ENCODE measurements at regions of chr6 and their contacts with region 1.

Region 1: DNA sequence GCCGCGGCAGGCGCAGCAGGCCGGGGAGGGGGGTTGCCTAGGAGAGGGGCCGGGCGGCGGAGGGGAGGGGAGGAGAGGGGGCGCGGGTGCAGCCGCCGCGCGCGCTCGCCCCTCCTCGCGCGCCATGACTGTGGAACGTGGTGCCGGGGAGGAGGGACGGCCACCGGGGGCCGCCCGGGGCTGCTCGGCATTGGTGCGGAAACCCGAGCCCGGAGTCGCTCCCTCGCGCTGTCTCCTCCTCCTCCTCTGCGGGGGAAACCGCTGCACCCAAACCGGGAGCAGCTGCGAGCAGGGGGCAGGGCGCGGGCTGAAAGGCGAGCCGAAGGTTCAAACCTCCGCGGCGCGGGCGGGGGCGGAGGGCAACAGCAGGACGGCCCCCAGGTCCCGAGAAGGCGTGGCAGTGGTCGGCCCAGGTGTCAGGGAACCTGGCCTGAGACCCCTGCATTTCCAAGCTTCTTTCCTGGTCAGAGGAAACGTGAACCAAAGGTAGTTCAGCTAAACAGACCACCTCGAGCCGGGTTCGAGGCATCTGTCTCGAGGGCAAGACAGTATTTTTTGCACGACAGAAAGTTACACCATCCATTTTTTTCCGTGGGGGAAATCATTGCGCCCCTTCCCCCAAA is 1.4 kb upstream of the TRERF1 start:
- DNase-seq: peak; percentile 96
- H3K4me3 ChIP-seq: peak overlapping the region; percentile 66 to 93 (median 80)
- H3K27ac ChIP-seq: peak overlapping the region; percentile 93 to 97 (median 95)
- H3K4me1 ChIP-seq: peaks cover 0 to 43% (median 22%) of the 10 kb centered on the region in 4 donors
- H3K27me3 ChIP-seq: no peaks in the 10 kb centered on the region
- CTCF ChIP-seq: no peak
- EP300 ChIP-seq: no peak
- POLR2A ChIP-seq: peak; percentile 60 to 70

Region 2: GRCh38 chr6:42217519-42218367 is 235.4 kb before region 1 on chr6 and contains the start of gene MRPS10:
- intact Hi-C with region 1: loop called (anchors 5 kb)
- DNase-seq: peak; percentile 96
- H3K4me3 ChIP-seq: peak within 1 kb of the TSS; percentile 60 to 73 (median 72)
- H3K27ac ChIP-seq: peak within 1 kb of the TSS; percentile 78 to 86 (median 82)
- H3K4me1 ChIP-seq: peaks cover 0 to 15% (median 13%) of the 10 kb centered on the region in 4 donors
- H3K27me3 ChIP-seq: no peaks in the 10 kb centered on the region
- CTCF ChIP-seq: no peak
- EP300 ChIP-seq: no peak
- POLR2A ChIP-seq: peak; percentile 86 to 92
- total RNA-seq, gene MRPS10: 27.7 to 35.2 (median 32.8) TPM

Region 3: GRCh38 chr6:42260972-42261371 is 192.2 kb before region 1 on chr6:
- intact Hi-C with region 1: loop called (anchors 5 kb)
- DNase-seq: peak; percentile 70
- H3K4me3 ChIP-seq: no peak overlapping the region
- H3K27ac ChIP-seq: peak overlapping the region in 3 of 4 donors; percentile 13 to 41 (median 40)
- H3K4me1 ChIP-seq: peaks cover 0 to 24% (median 6%) of the 10 kb centered on the region in 4 donors
- H3K27me3 ChIP-seq: no peaks in the 10 kb centered on the region
- CTCF ChIP-seq: peak; percentile 22 to 60 (median 34)
- EP300 ChIP-seq: no peak
- POLR2A ChIP-seq: no peak

Region 4: DNA sequence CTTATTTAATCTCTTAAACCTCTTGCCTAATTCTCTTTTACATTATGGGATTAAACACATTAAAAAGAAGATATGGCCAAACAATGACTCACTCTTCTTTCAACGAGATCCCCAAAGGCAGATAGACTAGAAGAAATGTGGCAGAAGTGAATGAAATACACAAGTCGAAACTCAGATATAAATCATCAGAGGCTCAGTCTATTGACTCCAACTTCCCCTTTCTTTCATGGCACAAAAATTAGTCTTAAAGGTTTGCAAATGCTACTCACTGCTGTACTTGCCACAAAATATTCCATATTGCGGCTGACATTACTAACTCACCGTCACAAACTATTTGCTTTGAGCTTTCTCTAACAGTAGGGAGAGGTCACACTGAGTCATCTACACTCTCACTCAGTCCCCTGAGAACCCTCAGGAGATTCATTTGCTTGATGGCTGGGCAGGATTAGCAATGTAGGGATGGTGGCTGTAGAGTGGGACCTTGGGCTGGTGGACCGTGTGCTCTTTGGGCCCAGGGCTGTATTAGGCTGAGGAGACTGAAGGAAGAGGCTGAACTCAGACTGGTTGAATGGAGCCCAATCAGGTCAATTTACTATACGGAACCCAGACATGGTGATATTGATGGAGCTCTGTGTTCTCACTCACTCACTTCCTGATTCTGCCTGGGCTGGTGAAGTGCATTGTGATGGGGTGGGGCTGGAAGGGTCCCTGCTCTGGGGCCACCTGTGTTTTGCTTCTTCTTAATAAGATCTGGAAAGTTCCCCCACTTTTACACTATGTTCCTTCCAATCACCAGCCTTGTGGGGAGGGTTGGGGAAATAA is 67.9 kb after region 1 on chr6:
- intact Hi-C with region 1: no loop called
- DNase-seq: no peak
- H3K4me3 ChIP-seq: no peak overlapping the region
- H3K27ac ChIP-seq: no peak overlapping the region
- H3K4me1 ChIP-seq: no peaks in the 10 kb centered on the region
- H3K27me3 ChIP-seq: no peaks in the 10 kb centered on the region
- CTCF ChIP-seq: no peak
- EP300 ChIP-seq: no peak
- POLR2A ChIP-seq: no peak

Region 5: DNA sequence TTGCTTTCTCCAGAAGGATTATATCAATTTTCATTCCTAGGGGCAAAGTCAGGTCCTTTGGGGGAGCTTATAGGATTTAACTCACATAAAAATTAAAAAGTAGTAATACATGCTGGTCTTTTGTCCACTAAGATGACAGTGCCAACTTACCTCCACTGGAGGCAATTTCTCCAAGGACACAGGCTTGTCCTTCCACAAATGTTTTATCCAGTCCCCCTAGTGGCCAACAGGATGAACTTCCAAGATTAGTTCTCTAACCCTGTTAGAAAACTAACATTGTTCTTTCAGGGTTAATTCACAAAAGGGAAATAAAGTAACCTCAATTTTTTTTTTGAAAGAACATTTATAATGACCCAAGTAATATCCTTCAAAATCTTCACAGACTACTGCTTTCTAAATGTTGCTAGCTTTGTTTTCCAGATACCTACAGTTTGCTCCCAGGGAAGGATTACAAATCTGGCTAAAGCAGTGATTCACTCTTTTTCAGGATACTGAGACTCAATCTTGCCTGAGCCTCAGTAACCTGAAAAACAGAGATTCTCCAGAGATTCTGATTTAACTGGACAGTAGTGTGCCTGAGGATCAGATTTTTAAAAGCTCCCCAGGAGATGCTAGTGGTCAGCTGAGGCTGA is 79.0 kb after region 1 on chr6:
- intact Hi-C with region 1: loop called (anchors 5 kb)
- DNase-seq: no peak
- H3K4me3 ChIP-seq: no peak overlapping the region
- H3K27ac ChIP-seq: no peak overlapping the region
- H3K4me1 ChIP-seq: no peaks in the 10 kb centered on the region
- H3K27me3 ChIP-seq: no peaks in the 10 kb centered on the region
- CTCF ChIP-seq: peak; percentile 48 to 90 (median 85)
- EP300 ChIP-seq: no peak
- POLR2A ChIP-seq: no peak

Region 6: GRCh38 chr6:42547407-42548329 is 94.5 kb after region 1 on chr6:
- intact Hi-C with region 1: loop called (anchors 5 kb)
- DNase-seq: peak; percentile 90
- H3K4me3 ChIP-seq: peak overlapping the region; percentile 31 to 53 (median 46)
- H3K27ac ChIP-seq: peak overlapping the region; percentile 63 to 76 (median 74)
- H3K4me1 ChIP-seq: peaks cover 0 to 10% (median 5%) of the 10 kb centered on the region in 4 donors
- H3K27me3 ChIP-seq: no peaks in the 10 kb centered on the region
- CTCF ChIP-seq: peak; percentile 79 to 95 (median 92)
- EP300 ChIP-seq: no peak
- POLR2A ChIP-seq: no peak

Measured in sigmoid colon (tissue), 7 donors.